Activated naive CD4-positive, alpha-beta T cell treated with anti-CD3 and anti-CD28 coated beads, Interleukin-2, amount 10 ng/mL, durations not matched to agents 7 days and 5 days (primary cell): ENCODE measurements at regions of chr2 and their contacts with region 1.

Region 1: GRCh38 chr2:241999184-241999583 is 129.7 kb downstream of the RTP5 start:
- DNase-seq: no peak
- H3K4me3 Mint-ChIP-seq: no peak overlapping the region
- H3K27ac Mint-ChIP-seq: no peak overlapping the region
- H3K4me1 Mint-ChIP-seq: peaks cover 10% of the 10 kb centered on the region
- H3K27me3 Mint-ChIP-seq: no peaks in the 10 kb centered on the region

Region 2: GRCh38 chr2:241950413-241951315 is 48.5 kb before region 1 on chr2:
- CTCF ChIA-PET with region 1: interaction called, 12 read pairs
- DNase-seq: peak; percentile 70
- H3K4me3 Mint-ChIP-seq: no peak overlapping the region
- H3K27ac Mint-ChIP-seq: no peak overlapping the region
- H3K4me1 Mint-ChIP-seq: no peaks in the 10 kb centered on the region
- H3K27me3 Mint-ChIP-seq: peaks cover 5% of the 10 kb centered on the region

Region 3: DNA sequence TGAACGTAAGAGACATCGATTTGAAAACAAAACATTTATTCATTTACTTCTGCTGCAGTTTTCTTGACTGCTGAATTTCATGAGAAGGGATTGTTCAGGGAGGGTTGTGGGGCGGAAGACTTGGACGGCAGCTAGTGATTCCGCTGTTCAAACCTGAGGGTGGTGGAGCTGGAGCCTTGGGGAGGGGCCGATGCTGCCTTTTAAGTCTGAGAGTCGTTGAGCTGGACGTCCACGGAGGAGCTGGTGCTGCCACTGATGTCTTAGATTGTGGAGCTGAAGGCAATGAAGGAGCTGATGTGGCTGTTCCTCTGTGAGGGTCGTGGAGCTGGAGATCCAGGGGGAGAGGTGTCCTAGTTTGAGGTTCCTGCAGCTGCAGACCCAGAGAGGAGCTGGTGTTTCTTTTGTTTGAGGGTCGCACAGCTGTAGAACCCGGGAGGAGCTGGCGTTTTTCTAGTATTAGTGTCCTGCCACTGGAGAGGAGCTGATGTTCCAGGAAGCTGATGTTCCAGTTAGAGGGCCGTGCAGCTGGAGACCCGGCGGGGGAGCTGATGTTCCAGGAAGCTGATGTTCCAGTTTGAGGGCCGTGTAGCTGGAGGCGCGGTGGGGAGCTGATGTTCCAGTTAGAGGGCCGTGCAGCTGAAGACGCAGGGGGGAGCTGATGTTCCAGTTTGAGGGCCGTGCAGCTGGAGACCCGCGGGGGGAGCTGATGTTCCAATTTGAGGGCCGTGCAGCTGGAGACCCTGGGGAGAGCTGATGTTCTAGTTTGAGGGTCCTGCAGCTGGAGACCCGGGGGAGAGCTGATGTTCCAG is 21.2 kb after region 1 on chr2:
- CTCF ChIA-PET with region 1: no interaction called
- DNase-seq: no peak
- H3K4me3 Mint-ChIP-seq: no peak overlapping the region
- H3K27ac Mint-ChIP-seq: no peak overlapping the region
- H3K4me1 Mint-ChIP-seq: peaks cover under 1% of the 10 kb centered on the region
- H3K27me3 Mint-ChIP-seq: peaks cover 50% of the 10 kb centered on the region

Region 4: GRCh38 chr2:242034996-242035814 is 36.0 kb after region 1 on chr2:
- CTCF ChIA-PET with region 1: no interaction called
- DNase-seq: no peak
- H3K4me3 Mint-ChIP-seq: no peak overlapping the region
- H3K27ac Mint-ChIP-seq: no peak overlapping the region
- H3K4me1 Mint-ChIP-seq: peaks cover 35% of the 10 kb centered on the region
- H3K27me3 Mint-ChIP-seq: peaks cover 60% of the 10 kb centered on the region